ENCODE measurements at regions of chr2 and their contacts with region 1.

Region 1: GRCh38 chr2:232999354-232999753 is 13.7 kb downstream of the NGEF start:
- DNase-seq: no peak
- H3K4me3 ChIP-seq: no peak overlapping the region
- CTCF ChIP-seq: no peak

Region 2: GRCh38 chr2:232927793-232928550 is 71.4 kb before region 1 on chr2:
- in situ Hi-C with region 1: loop called (anchors 5 kb)
- DNase-seq: no peak
- H3K4me3 ChIP-seq: peak overlapping the region; percentile 31
- CTCF ChIP-seq: no peak

Region 3: DNA sequence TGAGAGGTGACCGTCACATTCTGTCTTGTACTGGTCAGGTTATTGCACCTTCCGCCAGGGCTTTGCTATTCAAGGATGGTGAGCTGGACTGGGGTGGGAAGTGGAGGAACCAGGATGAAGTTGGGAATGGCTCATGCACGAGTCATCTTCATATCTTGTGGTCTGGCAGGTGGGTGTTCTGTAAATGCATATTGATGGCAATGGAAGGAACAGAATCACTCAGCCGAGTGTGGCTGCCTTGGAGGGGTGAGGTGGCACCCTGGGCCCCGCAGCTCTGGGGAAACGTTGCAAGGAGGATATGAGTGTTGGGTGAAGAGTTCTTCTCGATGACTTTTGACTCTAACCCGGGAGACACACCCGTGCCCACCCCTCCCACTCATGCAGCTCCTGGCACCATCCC is 34.3 kb after region 1 on chr2:
- in situ Hi-C with region 1: no loop called
- DNase-seq: no peak
- H3K4me3 ChIP-seq: no peak overlapping the region
- CTCF ChIP-seq: no peak

Measured in astrocyte of the cerebellum (primary cell).